Endothelial cell of umbilical vein (primary cell): ENCODE measurements at regions of chr10 and their contacts with region 1.

Region 1: GRCh38 chr10:125629763-125630376 is 53.1 kb downstream of the TEX36 start:
- DNase-seq: peak; percentile 81
- H3K4me3 ChIP-seq: no peak overlapping the region
- H3K27ac ChIP-seq: no peak overlapping the region
- H3K4me1 ChIP-seq: peaks cover 20% of the 10 kb centered on the region
- H3K27me3 ChIP-seq: no peaks in the 10 kb centered on the region
- CTCF ChIP-seq: peak; percentile 51 to 67
- POLR2A ChIP-seq: no peak

Region 2: GRCh38 chr10:125448607-125449006 is 181.3 kb before region 1 on chr10:
- CTCF ChIA-PET with region 1: interaction called, 12 read pairs
- POLR2A ChIA-PET with region 1: no interaction called
- dilution Hi-C with region 1: no loop called
- intact Hi-C with region 1: loop called (anchors 5 kb)
- DNase-seq: peak; percentile 23
- H3K4me3 ChIP-seq: no peak overlapping the region
- H3K27ac ChIP-seq: no peak overlapping the region
- H3K4me1 ChIP-seq: no peaks in the 10 kb centered on the region
- H3K27me3 ChIP-seq: no peaks in the 10 kb centered on the region
- CTCF ChIP-seq: peak; percentile 53 to 64
- POLR2A ChIP-seq: no peak

Region 3: GRCh38 chr10:125521721-125522680 is 107.9 kb before region 1 on chr10:
- CTCF ChIA-PET with region 1: no interaction called
- POLR2A ChIA-PET with region 1: no interaction called
- dilution Hi-C with region 1: no loop called
- intact Hi-C with region 1: loop called (anchors 1 kb)
- DNase-seq: no peak
- H3K4me3 ChIP-seq: no peak overlapping the region
- H3K27ac ChIP-seq: no peak overlapping the region
- H3K4me1 ChIP-seq: no peaks in the 10 kb centered on the region
- H3K27me3 ChIP-seq: peaks cover 0 to 2% of the 10 kb centered on the region in 2 experiments
- CTCF ChIP-seq: peak; percentile 66 to 71
- POLR2A ChIP-seq: no peak

Region 4: GRCh38 chr10:125549653-125550052 is 80.2 kb before region 1 on chr10:
- CTCF ChIA-PET with region 1: interaction called, 6 read pairs
- POLR2A ChIA-PET with region 1: no interaction called
- dilution Hi-C with region 1: no loop called
- intact Hi-C with region 1: loop called (anchors 1 kb)
- DNase-seq: no peak
- H3K4me3 ChIP-seq: no peak overlapping the region
- H3K27ac ChIP-seq: peak overlapping the region; percentile 73
- H3K4me1 ChIP-seq: peaks cover 22% of the 10 kb centered on the region
- H3K27me3 ChIP-seq: no peaks in the 10 kb centered on the region
- CTCF ChIP-seq: no peak
- POLR2A ChIP-seq: no peak

Region 5: GRCh38 chr10:125605167-125605566 is 24.7 kb before region 1 on chr10:
- CTCF ChIA-PET with region 1: interaction called, 22 read pairs
- POLR2A ChIA-PET with region 1: no interaction called
- dilution Hi-C with region 1: no loop called
- intact Hi-C with region 1: loop called (anchors 1 kb)
- DNase-seq: peak; percentile 21
- H3K4me3 ChIP-seq: no peak overlapping the region
- H3K27ac ChIP-seq: no peak overlapping the region
- H3K4me1 ChIP-seq: peaks cover 28% of the 10 kb centered on the region
- H3K27me3 ChIP-seq: peaks cover 0 to 2% of the 10 kb centered on the region in 2 experiments
- CTCF ChIP-seq: no peak
- POLR2A ChIP-seq: no peak

Region 6: GRCh38 chr10:125719146-125720001 is 89.5 kb after region 1 on chr10 and contains the start of gene EDRF1:
- CTCF ChIA-PET with region 1: interaction called, 3 read pairs
- POLR2A ChIA-PET with region 1: no interaction called
- dilution Hi-C with region 1: no loop called
- intact Hi-C with region 1: loop called (anchors 5 kb)
- DNase-seq: peak; percentile 100
- H3K4me3 ChIP-seq: peak within 1 kb of the TSS; percentile 65 to 98 (median 93)
- H3K27ac ChIP-seq: peak within 1 kb of the TSS; percentile 67
- H3K4me1 ChIP-seq: peaks cover 6% of the 10 kb centered on the region
- H3K27me3 ChIP-seq: no peaks in the 10 kb centered on the region
- CTCF ChIP-seq: no peak
- POLR2A ChIP-seq: peak; percentile 97
- total RNA-seq, gene EDRF1: 24.7 and 27.8 TPM in 2 replicates